ENCODE measurements at regions of chr1 and their contacts with region 1.

Region 1: DNA sequence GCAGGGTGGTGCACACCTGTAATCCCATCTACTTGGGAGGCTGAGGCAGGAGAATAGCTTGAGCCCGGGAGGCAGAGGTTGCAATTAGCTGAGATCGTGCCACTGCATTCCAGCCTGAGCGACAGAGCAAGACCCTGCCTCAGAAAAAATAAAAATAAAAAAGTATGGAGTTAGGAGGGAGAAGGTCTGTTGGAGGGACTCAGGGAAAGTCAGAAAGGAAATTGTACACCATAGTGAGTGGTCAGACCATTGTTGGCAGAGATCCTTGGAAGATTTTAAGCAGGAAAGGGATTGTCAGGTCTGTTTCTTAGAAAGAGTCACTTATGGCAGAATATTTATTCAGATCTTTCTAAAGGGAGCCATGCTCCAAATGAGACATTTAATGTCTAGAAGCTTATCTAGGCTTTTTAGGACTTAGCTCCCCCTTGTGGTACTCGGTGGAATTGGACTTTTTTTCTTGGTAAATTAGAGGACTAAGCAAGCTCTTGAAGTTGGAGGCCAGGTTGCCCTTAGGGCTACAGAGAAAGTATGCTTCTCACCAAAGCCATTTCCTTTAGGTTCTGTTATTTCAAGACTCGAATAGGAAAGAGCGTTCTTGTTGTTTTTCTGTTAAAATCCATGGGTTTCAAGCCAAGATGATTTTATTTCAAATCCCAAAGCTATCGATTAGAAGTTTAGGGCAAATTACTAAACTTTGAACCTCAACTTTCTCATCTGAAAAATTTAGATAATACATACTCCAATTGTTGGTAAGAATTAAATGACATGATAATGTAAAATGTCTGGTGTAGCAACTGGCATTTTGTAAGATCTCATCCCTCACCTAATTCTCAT is 16.5 kb downstream of the MIA3 start:
- DNase-seq: peak; percentile 75 to 79 (median 78)
- H3K4me3 ChIP-seq: no peak overlapping the region
- H3K4me3 Mint-ChIP-seq: no peak overlapping the region
- H3K27ac ChIP-seq: no peak overlapping the region
- H3K27ac Mint-ChIP-seq: peak overlapping the region in 5 of 7 donors; percentile 8 to 76 (median 54)
- H3K4me1 ChIP-seq: no peaks in the 10 kb centered on the region
- H3K4me1 Mint-ChIP-seq: peaks cover 4 to 13% (median 5%) of the 10 kb centered on the region in 4 donors
- H3K27me3 ChIP-seq: no peaks in the 10 kb centered on the region
- H3K27me3 Mint-ChIP-seq: no peaks in the 10 kb centered on the region

Region 2: GRCh38 chr1:222095606-222096475 is 538.6 kb before region 1 on chr1:
- CTCF ChIA-PET with region 1: interaction called, 7 read pairs
- POLR2A ChIA-PET with region 1: no interaction called
- intact Hi-C with region 1: loop called (anchors 10 kb)
- DNase-seq: peak; percentile 53 to 69 (median 61)
- H3K4me3 ChIP-seq: no peak overlapping the region
- H3K4me3 Mint-ChIP-seq: no peak overlapping the region
- H3K27ac ChIP-seq: no peak overlapping the region
- H3K27ac Mint-ChIP-seq: no peak overlapping the region
- H3K4me1 ChIP-seq: no peaks in the 10 kb centered on the region
- H3K4me1 Mint-ChIP-seq: no peaks in the 10 kb centered on the region
- H3K27me3 ChIP-seq: no peaks in the 10 kb centered on the region
- H3K27me3 Mint-ChIP-seq: no peaks in the 10 kb centered on the region

Region 3: DNA sequence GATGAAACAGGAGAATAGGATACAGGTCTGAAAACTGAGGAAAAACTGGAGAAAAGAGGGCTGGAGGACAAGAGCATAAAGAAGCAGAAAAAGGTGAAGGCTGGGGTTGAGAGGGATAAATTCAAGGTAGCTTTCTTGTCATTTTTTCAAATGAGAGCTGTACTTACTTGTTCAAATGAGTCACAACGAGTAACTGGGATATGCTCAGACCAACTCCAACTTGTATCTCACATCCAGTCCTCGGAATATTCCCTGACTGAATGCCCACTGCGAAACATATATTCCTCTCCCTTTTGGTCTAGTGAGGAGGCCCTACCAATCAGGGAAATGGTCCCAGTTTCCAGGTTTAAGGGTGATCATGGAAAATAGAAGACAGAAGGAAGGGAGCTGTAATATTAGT is 429.9 kb before region 1 on chr1:
- CTCF ChIA-PET with region 1: no interaction called
- POLR2A ChIA-PET with region 1: no interaction called
- intact Hi-C with region 1: no loop called
- DNase-seq: no peak
- H3K4me3 ChIP-seq: no peak overlapping the region
- H3K4me3 Mint-ChIP-seq: no peak overlapping the region
- H3K27ac ChIP-seq: no peak overlapping the region
- H3K27ac Mint-ChIP-seq: no peak overlapping the region
- H3K4me1 ChIP-seq: no peaks in the 10 kb centered on the region
- H3K4me1 Mint-ChIP-seq: no peaks in the 10 kb centered on the region
- H3K27me3 ChIP-seq: no peaks in the 10 kb centered on the region
- H3K27me3 Mint-ChIP-seq: peaks cover 0 to 1% of the 10 kb centered on the region in 2 donors

Region 4: GRCh38 chr1:222589462-222590302 is 44.7 kb before region 1 on chr1 and contains the start of gene TAF1A:
- CTCF ChIA-PET with region 1: interaction called, 13 read pairs
- POLR2A ChIA-PET with region 1: interaction called, 3 read pairs
- intact Hi-C with region 1: loop called (anchors 1 kb)
- DNase-seq: peak; percentile 85 to 94 (median 88)
- H3K4me3 ChIP-seq: peak within 1 kb of the TSS; percentile 78 to 85
- H3K4me3 Mint-ChIP-seq: peak within 1 kb of the TSS; percentile 95 to 99 (median 98)
- H3K27ac ChIP-seq: peak within 1 kb of the TSS; percentile 76
- H3K27ac Mint-ChIP-seq: peak within 1 kb of the TSS; percentile 92 to 100 (median 99)
- H3K4me1 ChIP-seq: peaks cover 27% of the 10 kb centered on the region
- H3K4me1 Mint-ChIP-seq: peaks cover 32 to 52% (median 43%) of the 10 kb centered on the region in 4 donors
- H3K27me3 ChIP-seq: no peaks in the 10 kb centered on the region
- H3K27me3 Mint-ChIP-seq: no peaks in the 10 kb centered on the region
- total RNA-seq, gene TAF1A: 16.4 to 17.8 TPM

Region 5: GRCh38 chr1:222617367-222617951 is 16.9 kb before region 1 on chr1:
- CTCF ChIA-PET with region 1: interaction called, 32 read pairs
- POLR2A ChIA-PET with region 1: interaction called, 3 read pairs
- intact Hi-C with region 1: loop called (anchors 1 kb)
- DNase-seq: peak; percentile 89 to 99 (median 92)
- H3K4me3 ChIP-seq: peak overlapping the region; percentile 25 to 74
- H3K4me3 Mint-ChIP-seq: peak overlapping the region; percentile 89 to 97 (median 94)
- H3K27ac ChIP-seq: peak overlapping the region; percentile 68
- H3K27ac Mint-ChIP-seq: peak overlapping the region; percentile 90 to 98 (median 97)
- H3K4me1 ChIP-seq: peaks cover 22% of the 10 kb centered on the region
- H3K4me1 Mint-ChIP-seq: peaks cover 19 to 37% (median 28%) of the 10 kb centered on the region in 4 donors
- H3K27me3 ChIP-seq: no peaks in the 10 kb centered on the region
- H3K27me3 Mint-ChIP-seq: peaks cover 15 to 24% of the 10 kb centered on the region in 2 donors

Region 6: DNA sequence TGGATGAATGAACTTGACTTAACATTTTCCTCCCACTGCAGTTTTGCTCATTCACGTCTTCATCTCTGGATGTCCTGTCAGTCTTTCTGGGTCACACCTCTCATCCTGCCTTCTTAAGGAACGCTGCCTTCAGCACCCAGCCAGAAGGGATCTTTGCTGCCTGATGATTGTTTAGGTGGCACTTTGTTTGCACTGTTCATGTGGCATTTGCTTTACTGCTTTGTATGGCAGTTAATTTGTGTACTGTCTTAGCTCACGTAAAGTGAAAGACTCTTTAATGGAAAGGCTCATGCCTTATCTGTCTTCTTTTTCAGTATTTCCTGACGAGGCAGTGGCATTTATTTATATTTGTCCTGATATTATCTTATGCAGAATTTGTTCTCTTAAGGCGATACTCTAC is 11.6 kb before region 1 on chr1:
- CTCF ChIA-PET with region 1: interaction called, 32 read pairs
- POLR2A ChIA-PET with region 1: interaction called, 3 read pairs
- intact Hi-C with region 1: loop called (anchors 1 kb)
- DNase-seq: no peak
- H3K4me3 ChIP-seq: no peak overlapping the region
- H3K4me3 Mint-ChIP-seq: no peak overlapping the region
- H3K27ac ChIP-seq: no peak overlapping the region
- H3K27ac Mint-ChIP-seq: peak overlapping the region in 1 of 7 donors; percentile 84
- H3K4me1 ChIP-seq: peaks cover 16% of the 10 kb centered on the region
- H3K4me1 Mint-ChIP-seq: peaks cover 17 to 31% (median 24%) of the 10 kb centered on the region in 4 donors
- H3K27me3 ChIP-seq: no peaks in the 10 kb centered on the region
- H3K27me3 Mint-ChIP-seq: no peaks in the 10 kb centered on the region

Region 7: GRCh38 chr1:222654849-222655248 is 20.5 kb after region 1 on chr1:
- CTCF ChIA-PET with region 1: interaction called, 13 read pairs
- POLR2A ChIA-PET with region 1: interaction called, 3 read pairs
- intact Hi-C with region 1: no loop called
- DNase-seq: peak; percentile 80 to 92 (median 87)
- H3K4me3 ChIP-seq: no peak overlapping the region
- H3K4me3 Mint-ChIP-seq: peak overlapping the region; percentile 37 to 76 (median 60)
- H3K27ac ChIP-seq: peak overlapping the region; percentile 67
- H3K27ac Mint-ChIP-seq: peak overlapping the region; percentile 90 to 98 (median 95)
- H3K4me1 ChIP-seq: peaks cover 32% of the 10 kb centered on the region
- H3K4me1 Mint-ChIP-seq: peaks cover 33 to 55% (median 46%) of the 10 kb centered on the region in 4 donors
- H3K27me3 ChIP-seq: no peaks in the 10 kb centered on the region
- H3K27me3 Mint-ChIP-seq: no peaks in the 10 kb centered on the region

Region 8: DNA sequence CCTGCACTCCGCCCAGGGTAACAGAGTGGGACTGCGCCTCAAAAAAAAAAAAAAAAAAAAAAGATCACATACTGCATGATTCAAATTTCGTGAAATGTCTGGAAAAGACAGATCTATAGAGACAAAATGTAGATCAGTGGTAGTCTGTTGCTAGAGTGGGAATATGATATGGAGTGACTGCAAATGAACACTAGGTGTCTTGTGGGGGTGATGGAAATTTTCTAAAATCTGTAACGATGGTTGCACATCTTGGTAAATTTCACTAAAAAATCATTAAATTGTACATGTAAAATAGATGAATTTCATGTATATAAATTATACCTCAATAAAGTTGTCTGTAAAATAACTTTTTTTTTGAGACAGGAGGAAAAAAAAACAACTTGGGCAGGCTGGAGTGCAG is 72.4 kb after region 1 on chr1:
- CTCF ChIA-PET with region 1: no interaction called
- POLR2A ChIA-PET with region 1: no interaction called
- intact Hi-C with region 1: no loop called
- DNase-seq: no peak
- H3K4me3 ChIP-seq: no peak overlapping the region
- H3K4me3 Mint-ChIP-seq: no peak overlapping the region
- H3K27ac ChIP-seq: no peak overlapping the region
- H3K27ac Mint-ChIP-seq: no peak overlapping the region
- H3K4me1 ChIP-seq: peaks cover 26% of the 10 kb centered on the region
- H3K4me1 Mint-ChIP-seq: peaks cover 39 to 81% (median 62%) of the 10 kb centered on the region in 4 donors
- H3K27me3 ChIP-seq: no peaks in the 10 kb centered on the region
- H3K27me3 Mint-ChIP-seq: no peaks in the 10 kb centered on the region

Region 9: DNA sequence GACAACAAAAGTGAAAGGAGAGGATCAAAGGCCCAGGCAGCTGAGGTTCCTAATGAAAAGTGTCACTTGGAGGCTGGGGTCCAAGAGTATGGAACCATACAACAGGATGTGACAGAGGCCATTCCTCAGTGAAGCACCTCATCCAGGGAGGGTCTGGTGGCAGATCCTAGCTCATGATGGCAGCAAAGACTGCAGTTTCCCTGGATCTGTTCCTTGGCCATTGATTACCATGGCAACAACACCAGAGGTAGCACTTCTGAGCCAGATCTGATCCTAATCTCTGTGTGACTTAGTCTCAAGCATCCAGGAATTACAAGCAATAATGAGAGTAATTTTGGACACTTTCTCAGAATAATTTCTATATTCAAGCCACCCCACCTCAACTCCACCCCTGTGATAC is 115.5 kb after region 1 on chr1:
- CTCF ChIA-PET with region 1: no interaction called
- POLR2A ChIA-PET with region 1: no interaction called
- intact Hi-C with region 1: no loop called
- DNase-seq: peak in 1 of 5 donors; percentile 16
- H3K4me3 ChIP-seq: no peak overlapping the region
- H3K4me3 Mint-ChIP-seq: no peak overlapping the region
- H3K27ac ChIP-seq: no peak overlapping the region
- H3K27ac Mint-ChIP-seq: no peak overlapping the region
- H3K4me1 ChIP-seq: no peaks in the 10 kb centered on the region
- H3K4me1 Mint-ChIP-seq: no peaks in the 10 kb centered on the region
- H3K27me3 ChIP-seq: no peaks in the 10 kb centered on the region
- H3K27me3 Mint-ChIP-seq: peaks cover 7 to 13% of the 10 kb centered on the region in 2 donors

Region 10: DNA sequence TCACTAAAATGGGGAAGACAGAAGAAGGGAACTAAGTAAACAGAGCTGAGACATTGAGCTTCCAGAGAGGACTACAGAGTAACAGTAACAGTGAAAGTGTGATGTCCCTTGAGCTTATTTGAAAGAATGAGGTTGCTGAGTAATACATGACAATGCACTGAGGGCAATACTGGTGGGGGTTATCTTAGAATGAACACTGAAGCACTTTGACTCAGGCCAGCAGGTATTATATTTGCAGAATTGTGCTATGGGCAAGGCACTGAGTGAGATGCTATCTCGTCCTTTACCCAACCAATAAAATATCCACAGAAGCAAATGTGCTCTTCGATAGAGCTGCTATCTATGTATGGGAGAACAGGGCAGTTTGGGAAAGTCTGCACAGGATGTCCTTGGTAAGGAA is 313.7 kb after region 1 on chr1:
- CTCF ChIA-PET with region 1: no interaction called
- POLR2A ChIA-PET with region 1: no interaction called
- intact Hi-C with region 1: no loop called
- DNase-seq: no peak
- H3K4me3 ChIP-seq: no peak overlapping the region
- H3K4me3 Mint-ChIP-seq: no peak overlapping the region
- H3K27ac ChIP-seq: no peak overlapping the region
- H3K27ac Mint-ChIP-seq: no peak overlapping the region
- H3K4me1 ChIP-seq: no peaks in the 10 kb centered on the region
- H3K4me1 Mint-ChIP-seq: no peaks in the 10 kb centered on the region
- H3K27me3 ChIP-seq: no peaks in the 10 kb centered on the region
- H3K27me3 Mint-ChIP-seq: peaks cover 0 to 1% of the 10 kb centered on the region in 2 donors

Measured in CD4-positive, alpha-beta memory T cell (primary cell).